K562 (cell line): ENCODE measurements at regions of chr6 and their contacts with region 1.

Region 1: DNA sequence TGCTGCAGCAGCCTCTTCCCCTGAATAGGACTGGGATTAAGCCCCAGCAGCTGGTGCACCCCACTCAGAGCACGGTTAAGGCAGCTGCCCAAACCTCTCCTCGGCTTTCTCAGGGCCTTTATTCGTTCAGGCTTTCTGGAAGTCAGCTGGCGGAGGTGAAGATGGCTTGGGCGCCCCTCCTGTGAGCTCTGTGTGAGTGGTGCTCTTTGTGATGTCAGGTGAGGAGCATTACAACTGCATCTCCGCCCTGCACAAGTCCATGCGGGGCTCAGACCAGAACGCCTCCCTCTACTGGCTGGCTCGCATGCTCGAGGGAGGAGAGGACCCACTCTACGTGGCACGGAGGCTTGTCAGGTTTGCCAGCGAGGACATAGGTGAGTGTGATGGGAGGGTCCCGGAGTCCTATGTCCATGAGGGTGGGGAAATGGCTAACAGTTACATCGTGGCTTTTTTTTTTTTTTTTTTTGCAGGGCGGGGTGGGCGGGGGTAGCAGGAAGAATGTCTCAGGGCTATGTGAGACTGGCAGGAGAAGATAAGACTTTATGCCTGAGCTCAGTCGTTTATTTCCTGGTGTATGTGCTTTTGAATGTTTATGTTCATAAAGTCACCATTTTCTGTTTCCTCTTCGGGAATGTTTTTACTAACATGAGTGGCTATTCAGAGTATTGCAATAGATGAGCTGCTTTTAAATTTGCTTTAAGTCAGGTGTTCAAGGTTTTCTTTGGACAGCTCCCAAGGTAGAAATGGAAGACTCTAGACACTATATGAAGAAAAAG is 18.2 kb downstream of the WRNIP1 start:
- DNase-seq: peak; percentile 63 to 82 (median 74)
- ATAC-seq: peak; percentile 92
- H3K4me3 ChIP-seq: peak overlapping the region; percentile 21; the same call in 1 of the 2 replicates
- H3K27ac ChIP-seq: peak overlapping the region; percentile 61
- H3K4me1 ChIP-seq: peaks cover 19 to 20% of the 10 kb centered on the region in 2 experiments
- H3K27me3 ChIP-seq: no peaks in the 10 kb centered on the region
- CTCF ChIP-seq: peak; percentile 39 to 64 (median 49)
- EP300 ChIP-seq: peak; percentile 36; the same call in 1 of the 2 replicates
- POLR2A ChIP-seq: no peak; the same call in 1 of the 2 replicates
- RAD21 ChIP-seq: 0 out of 4 replicates have a peak, but pooled peaks of 1 of the 2 experiments have one; percentile 32

Region 2: GRCh38 chr6:2237001-2237400 is 546.4 kb before region 1 on chr6:
- CTCF ChIA-PET with region 1: no interaction called
- POLR2A ChIA-PET with region 1: no interaction called
- in situ Hi-C with region 1: no loop called
- intact Hi-C with region 1: no loop called
- DNase-seq: no peak
- ATAC-seq: no peak
- H3K4me3 ChIP-seq: no peak overlapping the region
- H3K27ac ChIP-seq: no peak overlapping the region
- H3K4me1 ChIP-seq: no peaks in the 10 kb centered on the region
- H3K27me3 ChIP-seq: no peaks in the 10 kb centered on the region
- CTCF ChIP-seq: no peak
- EP300 ChIP-seq: no peak
- POLR2A ChIP-seq: no peak
- RAD21 ChIP-seq: no peak

Region 3: DNA sequence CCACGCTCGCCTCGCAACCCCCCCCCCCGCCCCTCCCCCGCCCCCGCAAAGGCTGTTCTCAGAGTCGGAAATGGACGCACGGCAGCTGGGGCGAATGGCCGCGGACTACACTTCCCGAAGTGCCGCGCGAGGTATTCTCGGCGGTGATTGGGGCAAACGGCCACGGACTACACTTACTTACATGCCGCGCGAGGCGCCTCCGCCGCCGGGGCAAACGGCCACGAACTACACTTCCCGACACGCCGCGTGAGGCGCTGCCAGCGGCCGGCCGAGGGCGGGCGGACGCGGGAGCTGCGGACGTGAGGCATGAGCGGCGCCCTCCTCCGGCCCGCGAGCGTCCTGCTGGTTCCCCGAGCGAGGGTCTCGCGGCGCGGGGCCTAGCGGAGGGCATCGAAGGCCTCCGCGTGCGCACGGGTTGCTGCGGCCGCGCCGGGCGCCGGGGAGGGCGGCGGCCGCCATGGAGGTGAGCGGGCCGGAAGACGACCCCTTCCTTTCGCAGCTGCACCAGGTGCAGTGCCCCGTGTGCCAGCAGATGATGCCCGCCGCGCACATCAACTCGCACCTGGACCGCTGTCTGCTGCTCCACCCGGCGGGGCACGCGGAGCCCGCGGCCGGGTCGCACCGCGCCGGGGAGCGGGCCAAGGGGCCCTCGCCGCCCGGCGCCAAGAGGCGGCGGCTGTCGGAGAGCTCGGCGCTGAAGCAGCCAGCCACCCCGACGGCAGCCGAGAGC is 18.0 kb before region 1 on chr6 and contains the start of gene WRNIP1:
- CTCF ChIA-PET with region 1: no interaction called
- POLR2A ChIA-PET with region 1: interaction called, 151 read pairs
- in situ Hi-C with region 1: no loop called
- intact Hi-C with region 1: no loop called
- DNase-seq: peak; percentile 83 to 100 (median 92)
- ATAC-seq: peak; percentile 93
- H3K4me3 ChIP-seq: peak within 1 kb of the TSS; percentile 78
- H3K27ac ChIP-seq: peak within 1 kb of the TSS; percentile 85
- H3K4me1 ChIP-seq: peaks cover 37 to 39% of the 10 kb centered on the region in 2 experiments
- H3K27me3 ChIP-seq: no peaks in the 10 kb centered on the region
- CTCF ChIP-seq: peak; percentile 74 to 95 (median 78)
- EP300 ChIP-seq: no peak
- POLR2A ChIP-seq: no peak
- RAD21 ChIP-seq: peak in 1 of 2 experiments; percentile 17; a peak in 2 of 4 replicates
- polyA plus RNA-seq, gene WRNIP1: 13.2 to 15.9 TPM

Region 4: DNA sequence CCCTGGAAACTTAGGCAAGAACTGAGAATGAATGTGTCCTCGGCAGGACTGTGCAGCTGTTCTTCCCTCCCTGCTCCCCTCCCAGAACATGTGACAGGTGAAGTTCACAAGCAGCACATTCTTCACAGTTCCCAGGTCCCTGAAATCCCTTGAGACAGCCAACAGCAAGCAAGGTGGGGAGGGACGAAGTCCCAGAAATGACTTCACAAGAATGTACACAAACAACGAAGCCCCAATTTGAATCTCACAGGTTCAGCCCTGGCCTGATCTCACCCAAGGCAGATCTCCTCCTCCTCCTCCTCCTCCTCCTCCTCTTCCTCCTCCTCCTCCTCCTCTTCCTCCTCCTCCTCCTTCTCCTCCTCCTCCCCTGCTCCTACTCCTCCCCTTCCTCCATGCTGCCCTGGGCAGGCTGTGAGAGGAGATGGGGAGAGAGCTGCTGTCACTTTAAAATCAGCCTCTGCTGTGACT is 14.2 kb after region 1 on chr6:
- CTCF ChIA-PET with region 1: no interaction called
- POLR2A ChIA-PET with region 1: interaction called, 12 read pairs
- in situ Hi-C with region 1: no loop called
- intact Hi-C with region 1: no loop called
- DNase-seq: peak in 1 of 4 experiments; percentile 30
- ATAC-seq: peak; percentile 37
- H3K4me3 ChIP-seq: no peak overlapping the region
- H3K27ac ChIP-seq: no peak overlapping the region
- H3K4me1 ChIP-seq: peaks cover 13 to 16% of the 10 kb centered on the region in 2 experiments
- H3K27me3 ChIP-seq: no peaks in the 10 kb centered on the region
- CTCF ChIP-seq: no peak
- EP300 ChIP-seq: no peak
- POLR2A ChIP-seq: no peak
- RAD21 ChIP-seq: no peak